Stomach (tissue), 19 donors: ENCODE measurements at regions of chr11 and their contacts with region 1.

Region 1: DNA sequence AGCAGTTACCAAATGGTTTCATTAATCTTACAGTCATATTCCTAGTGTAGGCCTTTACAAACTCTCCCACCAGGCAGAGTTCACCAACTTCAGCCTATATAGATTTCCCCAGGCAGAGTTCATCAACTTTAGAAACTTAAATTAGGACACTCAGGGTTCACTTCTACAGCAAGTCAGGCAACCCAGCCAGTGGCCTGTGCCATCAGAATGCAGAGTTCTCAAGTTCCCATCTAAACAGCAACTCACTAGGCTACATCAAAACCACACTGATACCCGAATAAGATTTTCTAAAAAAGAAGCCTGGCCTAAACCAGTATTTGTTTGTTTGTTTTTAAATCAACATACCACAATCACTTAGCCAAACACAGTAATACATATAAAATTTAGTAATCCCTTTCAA is 33.7 kb downstream of the PICALM start:
- DNase-seq: no peak
- H3K4me3 ChIP-seq: no peak overlapping the region
- H3K27ac ChIP-seq: no peak overlapping the region
- H3K4me1 ChIP-seq: peaks cover 16 to 82% (median 48%) of the 10 kb centered on the region in 4 donors
- H3K27me3 ChIP-seq: no peaks in the 10 kb centered on the region
- CTCF ChIP-seq: no peak
- EP300 ChIP-seq: no peak
- POLR2A ChIP-seq: no peak

Region 2: DNA sequence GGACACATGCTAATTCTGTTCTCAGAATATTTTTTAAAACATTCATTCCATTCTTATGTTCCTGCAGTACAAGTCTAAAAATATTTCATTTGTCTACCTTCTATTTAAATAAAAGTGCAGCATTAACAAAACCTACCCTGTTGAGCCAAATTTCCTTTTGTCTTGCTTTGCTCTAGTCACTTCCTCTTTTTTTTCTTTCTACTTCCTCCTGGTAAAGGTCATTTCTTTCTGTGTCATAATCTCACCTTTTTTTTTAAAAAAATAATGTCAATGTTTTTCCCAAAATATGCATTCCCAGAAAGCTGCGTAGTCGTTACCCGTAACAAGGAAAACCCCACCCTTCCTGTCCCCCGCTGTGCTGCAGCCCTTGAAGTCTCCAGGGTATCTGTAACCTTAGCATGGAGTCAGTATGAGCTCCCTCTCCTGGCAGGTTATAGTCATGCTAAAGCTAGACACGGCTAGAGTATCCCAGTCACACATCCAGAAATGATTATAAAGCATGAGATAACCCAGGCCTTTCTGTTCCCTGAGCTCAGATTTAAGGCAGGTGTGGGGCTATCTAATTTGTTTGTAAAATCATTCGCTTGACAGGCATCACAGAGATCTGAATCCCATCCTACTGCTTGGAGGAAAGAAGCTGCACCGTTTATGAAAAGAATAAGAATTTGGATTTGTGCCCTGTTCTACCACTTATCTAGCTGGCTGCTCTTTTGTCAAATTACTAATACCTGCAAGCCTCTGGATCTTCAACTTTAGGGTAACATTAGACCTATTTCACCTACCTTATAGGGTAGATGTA is 158.3 kb after region 1 on chr11:
- intact Hi-C with region 1: loop called (anchors 10 kb)
- DNase-seq: peak; percentile 56 to 87
- H3K4me3 ChIP-seq: peak overlapping the region in 3 of 4 donors; percentile 3 to 23 (median 18)
- H3K27ac ChIP-seq: peak overlapping the region in 4 of 5 donors; percentile 4 to 75 (median 50)
- H3K4me1 ChIP-seq: peaks cover 0 to 41% (median 12%) of the 10 kb centered on the region in 4 donors
- H3K27me3 ChIP-seq: no peaks in the 10 kb centered on the region
- CTCF ChIP-seq: peak in 5 of 7 experiments; percentile 53 to 76 (median 71)
- EP300 ChIP-seq: peak; percentile 40
- POLR2A ChIP-seq: no peak